ENCODE measurements at regions of chr11 and their contacts with region 1.

Region 1: DNA sequence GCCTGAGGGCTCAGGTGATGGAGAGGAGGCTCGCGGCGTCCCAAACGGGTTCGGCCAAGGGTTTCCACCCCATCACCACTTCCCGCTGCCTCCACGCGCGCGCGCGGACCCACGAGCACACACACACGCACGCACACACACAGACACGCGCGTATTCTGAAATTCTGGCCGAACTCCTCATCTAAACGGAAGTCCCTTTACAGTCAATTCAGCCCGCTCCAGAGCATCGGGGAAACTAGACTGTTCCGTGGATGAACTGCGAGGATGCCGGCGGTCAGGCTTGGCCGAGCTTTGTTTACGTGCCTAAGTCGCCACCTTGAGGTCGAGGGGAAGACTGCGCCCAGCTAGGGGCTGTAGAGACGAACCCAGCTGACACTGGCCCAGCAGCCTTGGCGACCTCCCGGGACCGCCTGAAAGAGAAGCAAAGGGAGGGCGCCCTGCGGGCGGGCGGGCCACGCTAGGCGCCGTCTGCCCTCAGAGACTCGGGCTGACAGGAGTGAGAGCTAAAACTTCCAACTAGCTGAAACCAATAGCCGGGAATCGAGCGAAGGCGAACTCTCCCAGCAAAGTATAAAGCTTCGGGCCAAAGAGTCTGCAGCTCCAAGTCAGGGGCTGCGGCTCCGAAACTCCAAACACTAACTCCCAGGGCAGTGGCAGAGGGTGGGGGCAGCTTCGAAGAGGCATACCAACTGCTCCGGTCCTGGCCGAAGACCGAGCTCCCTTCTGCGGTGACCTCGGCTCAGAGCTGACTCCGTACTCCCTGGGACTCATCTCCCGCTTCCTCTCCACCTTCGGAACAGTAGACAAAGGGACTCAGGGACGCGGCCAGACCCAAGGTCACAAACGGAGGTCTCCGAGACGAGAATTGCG is 124.7 kb upstream of the C11orf58 start:
- DNase-seq: peak; percentile 90
- H3K4me3 Mint-ChIP-seq: peak overlapping the region; percentile 76
- H3K27ac Mint-ChIP-seq: peak overlapping the region; percentile 12
- H3K4me1 Mint-ChIP-seq: peaks cover 16% of the 10 kb centered on the region
- H3K27me3 Mint-ChIP-seq: peaks cover 50% of the 10 kb centered on the region

Region 2: GRCh38 chr11:15650105-15650938 is 963.4 kb before region 1 on chr11:
- intact Hi-C with region 1: loop called (anchors 1 kb)
- DNase-seq: peak; percentile 93
- H3K4me3 Mint-ChIP-seq: no peak overlapping the region
- H3K27ac Mint-ChIP-seq: no peak overlapping the region
- H3K4me1 Mint-ChIP-seq: no peaks in the 10 kb centered on the region
- H3K27me3 Mint-ChIP-seq: peaks cover 23% of the 10 kb centered on the region

Region 3: DNA sequence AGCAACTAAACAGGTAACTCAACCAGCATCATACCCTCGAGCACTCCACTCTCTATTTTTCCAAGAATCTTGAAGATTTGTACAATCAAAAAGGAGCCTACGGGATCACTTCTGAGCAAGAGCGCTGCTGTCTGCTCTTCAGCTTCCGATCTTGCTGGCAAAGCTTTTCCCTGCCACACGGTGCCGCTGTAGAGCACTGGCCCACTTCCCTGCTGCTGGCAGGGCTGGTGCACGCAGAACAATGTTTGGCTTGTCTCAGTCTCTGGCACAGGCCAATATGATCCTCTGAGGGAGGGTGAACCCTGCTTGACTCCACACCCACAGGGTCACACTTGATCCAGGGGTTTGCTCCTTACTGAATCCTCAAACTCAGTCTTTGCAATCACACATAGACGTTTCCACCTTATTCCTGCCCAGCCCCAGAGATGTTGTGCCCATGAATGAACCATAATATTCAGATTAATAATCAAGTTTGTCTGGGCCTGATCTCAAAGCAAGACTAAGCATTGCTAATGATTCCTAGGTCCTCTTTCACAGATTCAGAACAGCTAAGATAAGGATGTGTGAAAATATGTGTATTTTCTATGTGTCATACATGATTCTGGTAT is 794.0 kb before region 1 on chr11:
- intact Hi-C with region 1: loop called (anchors 10 kb)
- DNase-seq: peak; percentile 79
- H3K4me3 Mint-ChIP-seq: no peak overlapping the region
- H3K27ac Mint-ChIP-seq: peak overlapping the region; percentile 29
- H3K4me1 Mint-ChIP-seq: peaks cover 5% of the 10 kb centered on the region
- H3K27me3 Mint-ChIP-seq: no peaks in the 10 kb centered on the region

Region 4: GRCh38 chr11:15941201-15941770 is 672.5 kb before region 1 on chr11:
- intact Hi-C with region 1: loop called (anchors 2 kb)
- DNase-seq: peak; percentile 68
- H3K4me3 Mint-ChIP-seq: no peak overlapping the region
- H3K27ac Mint-ChIP-seq: no peak overlapping the region
- H3K4me1 Mint-ChIP-seq: no peaks in the 10 kb centered on the region
- H3K27me3 Mint-ChIP-seq: no peaks in the 10 kb centered on the region

Region 5: DNA sequence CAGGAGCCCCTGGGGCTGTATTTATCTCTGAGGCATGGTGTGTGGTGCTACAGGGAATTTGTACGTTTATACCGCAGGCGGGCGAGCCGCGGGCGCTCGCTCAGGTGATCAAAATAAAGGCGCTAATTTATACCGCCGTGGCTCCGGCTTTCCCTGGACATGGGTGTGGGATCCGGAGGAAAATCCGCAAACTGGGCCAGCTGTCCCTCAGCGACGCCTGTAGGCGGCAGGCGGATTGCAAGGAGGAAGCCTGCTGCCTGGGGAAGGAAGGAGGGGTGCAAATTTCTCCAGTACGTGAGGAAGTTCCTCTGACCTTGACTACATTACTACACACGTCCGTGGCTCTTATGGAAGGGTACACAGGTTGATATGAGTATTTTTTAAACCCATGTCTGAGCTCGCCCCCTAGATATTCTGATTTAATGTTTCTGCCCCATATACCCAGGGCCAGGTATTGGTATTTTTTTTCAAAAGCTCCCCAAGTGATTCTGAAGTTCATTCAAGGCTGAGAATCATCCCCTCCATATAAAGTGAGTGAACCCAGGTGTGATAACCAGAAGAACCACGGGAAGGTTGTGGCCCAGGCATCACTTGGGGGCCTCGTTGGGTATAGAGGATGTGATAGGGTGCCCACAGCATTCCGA is 1108.4 kb after region 1 on chr11:
- intact Hi-C with region 1: loop called (anchors 5 kb)
- DNase-seq: no peak
- H3K4me3 Mint-ChIP-seq: no peak overlapping the region
- H3K27ac Mint-ChIP-seq: no peak overlapping the region
- H3K4me1 Mint-ChIP-seq: no peaks in the 10 kb centered on the region
- H3K27me3 Mint-ChIP-seq: peaks cover 54% of the 10 kb centered on the region